ENCODE measurements at regions of chr1 and their contacts with region 1.

Region 1: DNA sequence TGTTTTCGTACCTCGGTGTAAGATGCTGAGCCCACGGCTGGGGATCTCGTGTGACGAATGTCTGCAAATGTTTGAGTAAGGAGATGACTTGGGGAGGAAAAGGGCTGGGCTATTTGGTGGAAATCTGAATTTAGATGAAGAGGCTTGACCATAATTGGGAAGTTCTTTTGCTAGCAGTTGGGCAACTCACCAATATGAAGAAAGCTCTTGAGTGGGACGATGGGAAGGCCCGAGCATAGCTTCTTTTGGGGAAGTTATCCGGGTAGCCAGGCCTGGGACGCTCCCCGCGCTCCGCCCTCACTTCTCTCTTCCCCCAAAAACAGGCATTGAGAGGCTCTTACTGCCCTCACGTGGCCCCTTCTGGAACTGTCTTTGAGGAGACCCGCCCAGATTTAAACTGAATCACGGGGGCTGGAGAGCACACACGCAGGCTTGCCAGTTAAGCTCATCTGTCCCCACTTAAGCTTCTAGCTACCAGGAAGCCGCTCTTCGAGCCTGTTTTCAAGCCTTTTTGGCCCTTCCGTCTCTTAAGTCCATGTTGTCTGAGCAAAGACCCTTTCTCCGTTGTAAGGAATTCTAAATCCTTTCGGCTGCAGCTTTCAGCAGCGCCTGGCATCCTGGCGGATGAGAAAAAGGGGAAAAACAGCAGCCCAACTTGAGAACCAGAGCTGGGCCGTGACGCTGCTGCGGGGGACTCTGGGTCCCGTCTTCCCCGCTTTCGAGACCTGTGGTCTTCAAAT is 93.1 kb downstream of the NID1 start:
- DNase-seq: peak; percentile 95
- ATAC-seq: peak; percentile 99
- H3K4me3 Mint-ChIP-seq: peak overlapping the region; percentile 70
- H3K27ac Mint-ChIP-seq: peak overlapping the region; percentile 94
- H3K4me1 Mint-ChIP-seq: peaks cover 16% of the 10 kb centered on the region
- H3K27me3 Mint-ChIP-seq: no peaks in the 10 kb centered on the region
- CTCF ChIP-seq: peak; percentile 83

Region 2: GRCh38 chr1:235513495-235514366 is 458.0 kb before region 1 on chr1:
- CTCF ChIA-PET with region 1: interaction called, 14 read pairs
- POLR2A ChIA-PET with region 1: no interaction called
- intact Hi-C with region 1: loop called (anchors 5 kb)
- DNase-seq: peak; percentile 54
- ATAC-seq: peak; percentile 79
- H3K4me3 Mint-ChIP-seq: no peak overlapping the region
- H3K27ac Mint-ChIP-seq: no peak overlapping the region
- H3K4me1 Mint-ChIP-seq: peaks cover 2% of the 10 kb centered on the region
- H3K27me3 Mint-ChIP-seq: peaks cover 1% of the 10 kb centered on the region
- CTCF ChIP-seq: peak; percentile 85

Region 3: DNA sequence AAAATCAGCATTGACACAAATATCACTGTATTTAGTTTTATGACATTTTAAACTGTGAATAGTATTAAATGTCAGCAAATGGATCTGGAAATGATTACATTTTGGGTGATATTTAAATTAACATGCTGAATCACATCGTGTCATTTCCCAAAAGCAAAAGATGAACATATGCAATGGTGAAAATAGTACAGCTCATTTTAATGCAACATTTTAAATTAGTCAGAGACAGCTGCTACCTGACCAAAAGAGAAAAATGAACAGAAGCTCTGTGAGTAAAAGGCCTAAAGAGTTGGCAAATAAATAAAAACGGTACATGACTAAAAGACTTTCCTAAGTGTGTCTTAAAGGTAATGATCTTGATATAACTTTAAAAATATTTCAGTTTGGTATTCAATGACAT is 236.1 kb before region 1 on chr1:
- CTCF ChIA-PET with region 1: no interaction called
- POLR2A ChIA-PET with region 1: no interaction called
- intact Hi-C with region 1: no loop called
- DNase-seq: no peak
- ATAC-seq: no peak
- H3K4me3 Mint-ChIP-seq: no peak overlapping the region
- H3K27ac Mint-ChIP-seq: no peak overlapping the region
- H3K4me1 Mint-ChIP-seq: peaks cover 4% of the 10 kb centered on the region
- H3K27me3 Mint-ChIP-seq: no peaks in the 10 kb centered on the region
- CTCF ChIP-seq: no peak

Region 4: GRCh38 chr1:235791532-235792060 is 180.1 kb before region 1 on chr1:
- CTCF ChIA-PET with region 1: interaction called, 13 read pairs
- POLR2A ChIA-PET with region 1: no interaction called
- intact Hi-C with region 1: no loop called
- DNase-seq: no peak
- ATAC-seq: no peak
- H3K4me3 Mint-ChIP-seq: no peak overlapping the region
- H3K27ac Mint-ChIP-seq: no peak overlapping the region
- H3K4me1 Mint-ChIP-seq: peaks cover 2% of the 10 kb centered on the region
- H3K27me3 Mint-ChIP-seq: no peaks in the 10 kb centered on the region
- CTCF ChIP-seq: no peak

Region 5: DNA sequence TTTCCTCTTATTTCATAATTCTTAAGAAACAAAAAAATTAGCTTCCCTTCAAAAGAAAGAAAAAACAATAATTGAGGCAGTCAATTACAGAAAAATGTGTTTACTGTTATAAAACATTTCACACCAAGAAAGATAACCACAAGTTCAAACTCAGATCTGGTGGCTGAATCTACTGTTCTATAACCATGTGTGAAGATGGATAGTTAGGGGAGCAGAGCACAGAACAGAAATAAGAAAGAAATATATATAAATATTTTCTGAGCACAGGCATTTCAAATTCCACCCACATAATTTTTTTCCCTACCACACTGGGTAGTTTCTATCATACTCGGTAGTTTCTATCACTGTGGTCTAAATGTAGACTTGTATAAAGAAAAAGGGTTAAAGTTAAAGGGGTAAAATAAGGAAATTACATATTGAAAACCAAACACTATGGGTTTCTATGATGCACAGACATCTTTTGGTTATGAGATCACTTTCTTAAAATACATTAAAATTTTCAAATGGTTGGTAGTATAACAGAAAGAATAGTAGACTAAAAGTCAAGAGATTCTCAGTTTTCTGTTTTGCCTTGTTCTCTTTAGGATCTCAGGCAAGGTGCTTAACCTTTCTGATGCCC is 115.8 kb before region 1 on chr1:
- CTCF ChIA-PET with region 1: interaction called, 32 read pairs
- POLR2A ChIA-PET with region 1: interaction called, 5 read pairs
- intact Hi-C with region 1: no loop called
- DNase-seq: no peak
- ATAC-seq: peak; percentile 74
- H3K4me3 Mint-ChIP-seq: peak overlapping the region; percentile 47
- H3K27ac Mint-ChIP-seq: peak overlapping the region; percentile 95
- H3K4me1 Mint-ChIP-seq: peaks cover 55% of the 10 kb centered on the region
- H3K27me3 Mint-ChIP-seq: no peaks in the 10 kb centered on the region
- CTCF ChIP-seq: no peak

Region 6: GRCh38 chr1:235917267-235917811 is 54.4 kb before region 1 on chr1:
- CTCF ChIA-PET with region 1: interaction called, 21 read pairs
- POLR2A ChIA-PET with region 1: no interaction called
- intact Hi-C with region 1: no loop called
- DNase-seq: peak; percentile 83
- ATAC-seq: peak; percentile 97
- H3K4me3 Mint-ChIP-seq: no peak overlapping the region
- H3K27ac Mint-ChIP-seq: peak overlapping the region; percentile 92
- H3K4me1 Mint-ChIP-seq: peaks cover 45% of the 10 kb centered on the region
- H3K27me3 Mint-ChIP-seq: no peaks in the 10 kb centered on the region
- CTCF ChIP-seq: no peak

Region 7: DNA sequence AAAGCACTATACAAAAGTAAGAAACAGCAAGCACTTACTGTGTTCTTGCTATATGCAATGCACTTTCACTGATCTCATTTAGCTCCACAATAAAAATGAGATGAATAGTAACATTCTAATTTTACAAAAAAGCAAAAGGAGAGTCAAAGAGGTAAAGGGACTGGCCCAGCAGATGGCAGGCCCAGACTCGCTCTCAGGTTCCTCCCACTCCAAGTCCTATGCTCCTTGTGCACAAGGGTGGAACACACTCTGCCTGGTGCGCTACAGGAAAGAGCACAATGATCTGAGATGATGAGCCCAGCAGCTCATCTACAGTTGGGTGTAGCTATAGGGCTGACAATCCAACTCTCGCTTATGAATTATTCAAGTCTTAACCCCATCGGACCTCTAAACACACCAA is 10.9 kb before region 1 on chr1:
- CTCF ChIA-PET with region 1: interaction called, 72 read pairs
- POLR2A ChIA-PET with region 1: interaction called, 7 read pairs
- intact Hi-C with region 1: no loop called
- DNase-seq: no peak
- ATAC-seq: no peak
- H3K4me3 Mint-ChIP-seq: no peak overlapping the region
- H3K27ac Mint-ChIP-seq: no peak overlapping the region
- H3K4me1 Mint-ChIP-seq: peaks cover 21% of the 10 kb centered on the region
- H3K27me3 Mint-ChIP-seq: no peaks in the 10 kb centered on the region
- CTCF ChIP-seq: no peak

Region 8: DNA sequence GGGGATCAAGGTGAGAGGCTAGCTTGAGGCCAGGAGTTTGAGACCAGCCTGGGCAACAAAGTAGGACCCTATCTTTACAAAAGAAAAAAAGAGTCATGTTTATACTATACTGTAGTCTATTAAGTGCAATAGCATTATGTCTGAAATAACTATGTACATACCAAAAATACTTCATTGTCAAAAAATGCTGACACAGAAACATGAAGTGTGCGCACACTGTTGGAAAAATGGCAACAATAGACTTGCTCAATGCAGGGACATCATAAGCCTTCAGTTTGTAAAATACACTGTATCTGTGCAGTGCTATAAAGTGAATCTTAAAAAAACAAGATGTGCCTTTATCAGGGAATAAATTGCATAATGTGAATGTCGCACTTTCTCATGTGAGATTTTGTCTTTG is 107.3 kb after region 1 on chr1:
- CTCF ChIA-PET with region 1: no interaction called
- POLR2A ChIA-PET with region 1: no interaction called
- intact Hi-C with region 1: no loop called
- DNase-seq: no peak
- ATAC-seq: no peak
- H3K4me3 Mint-ChIP-seq: no peak overlapping the region
- H3K27ac Mint-ChIP-seq: no peak overlapping the region
- H3K4me1 Mint-ChIP-seq: peaks cover 7% of the 10 kb centered on the region
- H3K27me3 Mint-ChIP-seq: peaks cover 5% of the 10 kb centered on the region
- CTCF ChIP-seq: no peak

Region 9: GRCh38 chr1:236091933-236092318 is 120.2 kb after region 1 on chr1:
- CTCF ChIA-PET with region 1: no interaction called
- POLR2A ChIA-PET with region 1: no interaction called
- intact Hi-C with region 1: no loop called
- DNase-seq: no peak
- ATAC-seq: no peak
- H3K4me3 Mint-ChIP-seq: no peak overlapping the region
- H3K27ac Mint-ChIP-seq: no peak overlapping the region
- H3K4me1 Mint-ChIP-seq: no peaks in the 10 kb centered on the region
- H3K27me3 Mint-ChIP-seq: peaks cover 16% of the 10 kb centered on the region
- CTCF ChIP-seq: no peak

Measured in activated CD8-positive, alpha-beta T cell treated with anti-CD3 and anti-CD28 coated beads for 36 hours (primary cell).